Heart right ventricle (tissue), 16 donors: ENCODE measurements at regions of chr4 and their contacts with region 1.

Region 1: DNA sequence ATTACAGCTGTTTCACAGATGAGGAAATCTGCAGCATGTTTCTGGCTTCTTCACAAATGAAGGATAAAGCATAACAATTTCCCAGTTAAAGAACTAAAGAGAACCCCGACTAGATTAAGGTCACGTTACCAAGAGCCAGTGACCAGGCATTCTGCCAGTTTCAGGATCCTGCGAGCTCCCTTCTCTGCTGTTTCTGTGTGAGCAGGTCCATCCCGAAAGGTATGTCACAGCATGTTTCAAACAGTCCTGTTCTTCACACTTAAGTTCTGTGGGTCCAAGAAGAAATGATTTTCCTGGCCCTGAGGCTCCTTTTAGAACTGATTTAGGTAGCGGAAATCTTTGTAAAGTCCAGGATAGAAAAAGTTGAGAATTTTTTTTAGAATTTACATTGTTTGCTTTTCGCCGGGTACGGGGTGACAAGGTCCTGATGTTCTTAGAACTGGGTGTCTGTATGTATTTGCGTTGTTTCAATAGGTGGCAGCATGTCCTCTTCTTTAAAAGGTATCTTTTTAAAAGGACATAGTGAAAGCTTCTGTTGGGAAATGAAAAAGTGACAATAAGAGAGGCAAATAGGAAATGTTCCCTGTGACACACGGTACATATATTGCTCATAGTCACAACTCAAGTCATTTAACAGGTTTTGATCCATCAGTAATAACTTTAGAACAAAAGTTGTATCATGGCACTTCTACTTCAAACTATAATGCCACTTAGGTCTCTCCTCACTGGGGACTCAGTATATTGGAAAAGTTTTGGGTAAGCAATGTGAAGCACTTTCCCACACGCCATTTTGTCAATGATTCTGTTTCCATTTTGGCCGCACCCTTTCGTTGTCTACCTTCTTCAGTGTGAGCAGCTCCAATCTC is 18.4 kb downstream of the IL21 start:
- DNase-seq: no peak
- ATAC-seq: peak in 5 of 8 donors; percentile 59 to 79 (median 66)
- H3K4me3 ChIP-seq: no peak overlapping the region
- H3K27ac ChIP-seq: no peak overlapping the region
- H3K4me1 ChIP-seq: no peaks in the 10 kb centered on the region
- H3K27me3 ChIP-seq: peaks cover 0 to 37% (median 28%) of the 10 kb centered on the region in 7 donors
- CTCF ChIP-seq: peak in 7 of 9 donors; percentile 32 to 58 (median 47)

Region 2: GRCh38 chr4:122716825-122717448 is 114.4 kb after region 1 on chr4:
- intact Hi-C with region 1: loop called in 9 of 10 experiments (anchors 1 to 5 kb)
- DNase-seq: peak; percentile 29 to 64
- ATAC-seq: peak in 7 of 8 donors; percentile 75 to 89 (median 83)
- H3K4me3 ChIP-seq: no peak overlapping the region
- H3K27ac ChIP-seq: no peak overlapping the region
- H3K4me1 ChIP-seq: peaks cover 0 to 3% (median 0%) of the 10 kb centered on the region in 9 donors
- H3K27me3 ChIP-seq: no peaks in the 10 kb centered on the region
- CTCF ChIP-seq: peak; percentile 48 to 91 (median 84)

Region 3: GRCh38 chr4:122914292-122914904 is 311.9 kb after region 1 on chr4:
- intact Hi-C with region 1: loop called in 1 of 10 experiments (anchors 5 kb)
- DNase-seq: no peak
- ATAC-seq: peak in 6 of 8 donors; percentile 55 to 73 (median 56)
- H3K4me3 ChIP-seq: no peak overlapping the region
- H3K27ac ChIP-seq: no peak overlapping the region
- H3K4me1 ChIP-seq: no peaks in the 10 kb centered on the region
- H3K27me3 ChIP-seq: no peaks in the 10 kb centered on the region
- CTCF ChIP-seq: peak in 7 of 9 donors; percentile 12 to 57 (median 52)

Region 4: DNA sequence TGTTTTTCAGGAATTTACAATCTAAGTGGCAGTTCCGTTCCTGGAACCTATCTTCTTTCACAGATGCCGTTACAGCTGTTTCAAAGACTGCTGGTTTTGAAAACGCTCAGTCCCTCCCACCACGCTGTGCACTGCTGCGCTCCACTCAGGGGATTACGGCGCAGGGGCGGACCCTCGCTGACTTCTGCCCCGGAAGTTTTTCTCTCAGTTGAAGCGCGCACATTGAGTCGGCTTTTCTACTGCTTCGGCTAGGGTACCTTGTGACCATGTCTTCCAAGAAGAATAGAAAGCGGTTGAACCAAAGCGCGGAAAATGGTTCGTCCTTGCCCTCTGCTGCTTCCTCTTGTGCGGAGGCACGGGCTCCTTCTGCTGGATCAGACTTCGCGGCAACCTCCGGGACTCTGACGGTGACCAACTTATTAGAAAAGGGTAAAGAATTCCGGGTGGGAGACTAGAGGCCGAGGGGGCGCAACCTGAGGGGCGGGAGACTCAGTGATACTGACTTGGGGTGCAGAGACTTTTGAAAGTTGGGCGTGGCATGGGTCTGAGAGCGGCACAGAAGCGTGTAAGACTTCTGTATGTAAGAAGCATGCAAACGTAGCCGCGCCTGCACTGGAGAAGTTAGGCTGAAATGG is 320.5 kb after region 1 on chr4:
- intact Hi-C with region 1: loop called in 4 of 10 experiments (anchors 5 to 10 kb)
- DNase-seq: peak; percentile 82 to 86
- ATAC-seq: peak; percentile 96 to 99 (median 98)
- H3K4me3 ChIP-seq: peak overlapping the region; percentile 64 to 95 (median 92)
- H3K27ac ChIP-seq: peak overlapping the region in 9 of 10 donors; percentile 69 to 90 (median 82)
- H3K4me1 ChIP-seq: peaks cover 0 to 25% (median 17%) of the 10 kb centered on the region in 9 donors
- H3K27me3 ChIP-seq: no peaks in the 10 kb centered on the region
- CTCF ChIP-seq: peak in 1 of 9 donors; percentile 12

Region 5: GRCh38 chr4:122930862-122931261 is 328.4 kb after region 1 on chr4:
- intact Hi-C with region 1: loop called in 8 of 10 experiments (anchors 2 to 10 kb)
- DNase-seq: no peak
- ATAC-seq: no peak
- H3K4me3 ChIP-seq: no peak overlapping the region
- H3K27ac ChIP-seq: no peak overlapping the region
- H3K4me1 ChIP-seq: no peaks in the 10 kb centered on the region
- H3K27me3 ChIP-seq: no peaks in the 10 kb centered on the region
- CTCF ChIP-seq: peak; percentile 28 to 77 (median 65)

Region 6: DNA sequence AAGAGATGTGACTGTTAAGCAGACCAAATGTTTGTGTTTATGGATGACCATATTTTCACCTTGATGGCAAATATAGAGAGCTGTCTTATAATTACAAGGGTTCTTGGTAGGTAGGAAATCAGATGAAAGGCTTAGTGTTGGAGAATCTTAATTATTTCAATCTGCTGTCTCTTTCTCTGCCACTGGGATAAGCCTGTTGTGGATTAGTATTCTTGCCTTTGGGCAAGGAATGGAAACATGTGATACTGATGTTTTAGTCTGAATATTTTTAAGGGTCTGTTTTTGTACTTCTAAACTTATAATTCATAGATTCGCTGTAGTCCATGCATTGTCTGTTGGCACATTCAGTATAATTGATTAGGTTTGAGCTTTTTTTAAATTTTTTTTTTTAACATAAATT is 343.6 kb after region 1 on chr4:
- intact Hi-C with region 1: loop called in 1 of 10 experiments (anchors 5 kb)
- DNase-seq: no peak
- ATAC-seq: no peak
- H3K4me3 ChIP-seq: no peak overlapping the region
- H3K27ac ChIP-seq: no peak overlapping the region
- H3K4me1 ChIP-seq: no peaks in the 10 kb centered on the region
- H3K27me3 ChIP-seq: no peaks in the 10 kb centered on the region
- CTCF ChIP-seq: no peak